ENCODE measurements at regions of chr4 and their contacts with region 1.

Region 1: DNA sequence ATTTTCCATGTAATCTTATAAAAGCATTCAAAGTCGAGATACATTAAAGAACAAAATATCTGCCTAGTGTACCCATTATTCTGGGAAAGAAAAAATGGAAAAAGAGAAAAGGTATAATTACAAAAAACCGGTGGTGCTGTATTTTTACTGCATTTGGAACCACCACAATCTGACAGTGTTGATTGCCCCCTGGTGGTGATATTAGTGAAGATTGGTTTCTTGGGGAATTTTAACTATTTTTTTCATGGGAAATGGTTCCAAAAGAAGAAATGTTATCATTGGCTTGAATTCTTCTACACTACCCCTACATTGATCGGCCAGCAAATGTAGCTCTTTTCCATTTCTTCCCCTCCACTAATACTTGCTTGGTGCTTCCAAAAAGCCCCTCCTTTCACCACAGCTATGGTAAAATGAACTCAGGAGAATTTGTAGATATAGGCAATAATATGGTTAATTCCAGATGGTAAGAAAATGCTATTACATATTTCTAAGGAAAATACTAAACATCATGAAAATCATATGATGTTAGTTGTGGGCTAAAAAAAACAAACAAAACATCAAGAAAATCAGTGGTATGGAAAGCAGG is 50.0 kb downstream of the COX18 start:
- DNase-seq: peak; percentile 22 to 64 (median 32)
- ATAC-seq: peak; percentile 67
- H3K4me3 ChIP-seq: no peak overlapping the region
- H3K27ac ChIP-seq: no peak overlapping the region
- H3K4me1 ChIP-seq: no peaks in the 10 kb centered on the region
- H3K27me3 ChIP-seq: peaks cover 0 to 10% of the 10 kb centered on the region in 2 experiments; a peak in 1 of 5 replicates
- CTCF ChIP-seq: peak; percentile 53 to 80 (median 55); a peak in 5 of 6 replicates
- EP300 ChIP-seq: no peak
- POLR2A ChIP-seq: no peak
- RAD21 ChIP-seq: peak; percentile 86 to 87

Region 2: GRCh38 chr4:71732706-71733105 is 1286.8 kb before region 1 on chr4:
- CTCF ChIA-PET with region 1: interaction called, 6 read pairs
- POLR2A ChIA-PET with region 1: no interaction called
- in situ Hi-C with region 1: loop called (anchors 25 kb)
- intact Hi-C with region 1: no loop called
- DNase-seq: peak; percentile 9 to 21 (median 16)
- ATAC-seq: no peak
- H3K4me3 ChIP-seq: no peak overlapping the region
- H3K27ac ChIP-seq: no peak overlapping the region
- H3K4me1 ChIP-seq: no peaks in the 10 kb centered on the region
- H3K27me3 ChIP-seq: peaks cover 0 to 9% of the 10 kb centered on the region in 2 experiments; a peak in 2 of 5 replicates
- CTCF ChIP-seq: peak in 2 of 3 experiments; percentile 41 to 66; a peak in 3 of 6 replicates
- EP300 ChIP-seq: no peak
- POLR2A ChIP-seq: no peak
- RAD21 ChIP-seq: peak; percentile 77 to 78

Region 3: GRCh38 chr4:72295966-72296557 is 723.5 kb before region 1 on chr4:
- CTCF ChIA-PET with region 1: interaction called, 18 read pairs
- POLR2A ChIA-PET with region 1: no interaction called
- in situ Hi-C with region 1: no loop called
- intact Hi-C with region 1: loop called (anchors 1 kb)
- DNase-seq: peak; percentile 34 to 46 (median 40)
- ATAC-seq: peak; percentile 93
- H3K4me3 ChIP-seq: no peak overlapping the region
- H3K27ac ChIP-seq: no peak overlapping the region
- H3K4me1 ChIP-seq: no peaks in the 10 kb centered on the region
- H3K27me3 ChIP-seq: no peaks in the 10 kb centered on the region
- CTCF ChIP-seq: peak; percentile 42 to 69 (median 55); a peak in 5 of 6 replicates
- EP300 ChIP-seq: no peak
- POLR2A ChIP-seq: no peak
- RAD21 ChIP-seq: peak; percentile 66 to 70

Region 4: DNA sequence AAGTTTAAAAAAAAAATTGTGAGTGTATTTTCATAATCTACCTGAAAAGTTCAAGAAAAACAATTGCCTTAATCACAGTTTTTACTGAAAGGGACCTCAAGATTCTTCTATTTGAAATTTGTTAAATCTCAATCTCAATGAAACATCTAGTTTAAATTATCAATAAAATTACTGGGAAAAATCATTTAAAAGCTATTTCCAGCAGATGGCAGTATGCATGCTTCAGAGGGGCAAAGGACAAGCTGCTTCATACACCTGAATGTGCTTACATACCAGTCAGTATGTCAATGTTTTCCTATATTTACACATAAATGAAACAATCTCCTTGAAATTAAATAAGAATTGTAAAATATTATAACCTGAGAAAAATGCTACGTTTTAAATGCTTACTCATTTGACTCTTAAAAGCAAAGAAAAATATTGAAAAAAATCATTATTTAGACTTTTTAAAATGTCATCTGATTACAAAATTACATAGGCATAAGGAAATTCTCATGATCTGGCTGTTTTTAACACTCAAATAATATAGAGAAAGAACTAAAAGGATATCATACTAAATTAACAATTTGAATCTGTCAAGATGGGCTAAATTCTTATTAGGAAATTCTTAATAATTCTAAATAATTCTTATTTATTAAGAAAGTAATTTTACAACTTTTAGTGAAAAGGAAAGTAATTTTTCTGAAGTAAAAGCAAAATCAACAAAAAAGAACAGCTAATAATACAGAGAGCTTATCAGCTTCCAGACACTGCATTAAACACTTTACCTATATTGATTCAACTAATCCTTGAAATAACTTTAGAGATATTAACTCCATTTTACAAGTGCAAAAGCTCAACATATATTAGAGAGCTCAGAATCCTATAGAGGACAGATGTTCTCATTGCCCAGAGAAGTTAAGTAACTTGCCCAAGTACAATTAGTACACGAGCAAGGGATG is 692.6 kb before region 1 on chr4:
- CTCF ChIA-PET with region 1: interaction called, 3 read pairs
- POLR2A ChIA-PET with region 1: no interaction called
- in situ Hi-C with region 1: no loop called
- intact Hi-C with region 1: loop called (anchors 10 kb)
- DNase-seq: peak in 2 of 4 experiments; percentile 29 to 43
- ATAC-seq: peak; percentile 57; the same call in 2 of the 3 replicates
- H3K4me3 ChIP-seq: no peak overlapping the region
- H3K27ac ChIP-seq: no peak overlapping the region
- H3K4me1 ChIP-seq: no peaks in the 10 kb centered on the region
- H3K27me3 ChIP-seq: no peaks in the 10 kb centered on the region
- CTCF ChIP-seq: peak; percentile 50 to 70 (median 53); a peak in 4 of 6 replicates
- EP300 ChIP-seq: no peak
- POLR2A ChIP-seq: no peak
- RAD21 ChIP-seq: peak; percentile 69 to 73

Region 5: DNA sequence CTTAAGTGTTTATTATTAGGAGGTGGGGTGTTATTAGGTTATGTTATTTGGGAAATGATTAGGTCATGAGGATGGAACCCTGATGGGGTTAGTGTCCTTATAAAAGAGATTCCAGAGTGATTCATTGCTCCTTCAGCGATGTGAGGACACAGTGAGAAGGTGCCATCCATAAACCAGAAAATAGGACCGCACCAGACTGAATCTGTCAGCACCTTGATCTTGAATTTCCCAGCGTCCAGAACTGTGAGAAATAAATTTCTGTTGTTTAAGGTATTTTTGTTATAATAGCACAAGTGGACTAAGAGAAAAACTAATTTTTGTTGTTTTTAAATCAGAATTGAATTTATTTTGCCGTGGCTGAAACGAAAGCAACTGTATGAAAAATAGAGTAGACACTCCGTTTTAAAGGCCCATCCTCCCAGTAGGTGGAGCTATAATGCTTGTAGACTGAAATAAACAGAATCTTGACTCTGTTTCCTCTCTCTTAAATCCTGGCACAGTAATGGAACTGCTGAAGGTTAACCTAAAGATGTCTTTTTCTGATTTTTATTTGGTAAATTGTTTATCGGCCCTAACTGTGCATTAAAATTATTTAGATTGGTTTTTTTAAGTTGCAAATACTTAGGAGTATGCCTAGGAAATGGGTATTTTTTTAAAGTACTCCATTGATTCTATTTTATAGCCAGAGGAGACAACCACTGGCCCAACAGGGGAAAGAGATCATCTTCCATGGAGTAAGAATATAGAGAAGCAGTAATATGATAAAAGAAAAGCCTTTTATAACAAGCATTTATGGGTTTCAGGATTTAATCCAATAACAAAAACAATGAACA is 317.4 kb before region 1 on chr4:
- CTCF ChIA-PET with region 1: interaction called, 4 read pairs
- POLR2A ChIA-PET with region 1: no interaction called
- in situ Hi-C with region 1: no loop called
- intact Hi-C with region 1: loop called (anchors 1 kb)
- DNase-seq: peak; percentile 33 to 77 (median 53)
- ATAC-seq: peak; percentile 82
- H3K4me3 ChIP-seq: peak overlapping the region; percentile 34
- H3K27ac ChIP-seq: no peak overlapping the region
- H3K4me1 ChIP-seq: peaks cover 0 to 28% of the 10 kb centered on the region in 2 experiments; a peak in 3 of 5 replicates
- H3K27me3 ChIP-seq: no peaks in the 10 kb centered on the region
- CTCF ChIP-seq: peak; percentile 58 to 79 (median 64); a peak in 5 of 6 replicates
- EP300 ChIP-seq: no peak
- POLR2A ChIP-seq: no peak
- RAD21 ChIP-seq: peak; percentile 84 to 87